Mammary epithelial cell (primary cell): ENCODE measurements at regions of chr11 and their contacts with region 1.

Region 1: GRCh38 chr11:11787305-11788062 is 54.3 kb upstream of the USP47 start:
- DNase-seq: peak; percentile 52
- H3K4me3 ChIP-seq: no peak overlapping the region
- H3K27ac ChIP-seq: no peak overlapping the region
- H3K4me1 ChIP-seq: peaks cover 13% of the 10 kb centered on the region
- H3K27me3 ChIP-seq: no peaks in the 10 kb centered on the region
- CTCF ChIP-seq: peak; percentile 78 to 83

Region 2: GRCh38 chr11:10770626-10771254 is 1016.7 kb before region 1 on chr11:
- CTCF ChIA-PET with region 1: no interaction called
- dilution Hi-C with region 1: no loop called
- in situ Hi-C with region 1: loop called in 1 of 2 experiments (anchors 25 kb)
- intact Hi-C with region 1: loop called (anchors 2 kb)
- DNase-seq: peak; percentile 20
- H3K4me3 ChIP-seq: no peak overlapping the region
- H3K27ac ChIP-seq: no peak overlapping the region
- H3K4me1 ChIP-seq: no peaks in the 10 kb centered on the region
- H3K27me3 ChIP-seq: no peaks in the 10 kb centered on the region
- CTCF ChIP-seq: peak; percentile 78 to 79

Region 3: DNA sequence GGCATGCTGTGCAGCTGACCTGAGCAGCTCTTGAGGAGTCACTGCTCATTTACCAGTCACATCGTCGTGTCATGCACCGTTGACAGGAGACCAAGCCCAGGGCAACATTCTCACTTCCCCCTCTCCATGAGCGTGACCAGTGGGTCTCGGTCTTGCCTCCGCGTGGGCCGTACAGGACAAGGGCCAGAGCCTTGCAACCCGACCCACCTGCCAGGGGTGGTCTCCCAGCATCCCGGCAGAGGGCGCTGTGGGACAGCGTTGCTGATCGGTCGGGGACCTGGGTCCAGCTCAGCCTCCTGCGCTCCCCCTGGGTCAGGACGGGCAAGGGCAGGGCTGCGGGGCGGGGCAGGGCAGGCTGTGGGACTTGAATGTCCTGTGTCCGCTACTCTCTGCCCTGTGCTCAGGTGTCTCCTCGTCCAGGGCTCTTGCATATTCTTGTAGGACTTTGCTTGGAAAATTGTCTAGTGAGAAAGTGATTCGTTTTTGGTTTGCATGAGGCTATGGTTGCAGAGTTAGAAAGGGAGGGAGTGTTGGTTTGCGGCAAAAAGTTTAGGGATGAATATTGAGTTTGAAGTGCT is 995.0 kb before region 1 on chr11:
- CTCF ChIA-PET with region 1: no interaction called
- dilution Hi-C with region 1: no loop called
- in situ Hi-C with region 1: loop called (anchors 5 to 25 kb)
- intact Hi-C with region 1: loop called (anchors 1 kb)
- DNase-seq: peak; percentile 59
- H3K4me3 ChIP-seq: peak overlapping the region in 1 of 3 experiments; percentile 17
- H3K27ac ChIP-seq: no peak overlapping the region
- H3K4me1 ChIP-seq: peaks cover 7% of the 10 kb centered on the region
- H3K27me3 ChIP-seq: no peaks in the 10 kb centered on the region
- CTCF ChIP-seq: peak; percentile 87 to 95

Region 4: DNA sequence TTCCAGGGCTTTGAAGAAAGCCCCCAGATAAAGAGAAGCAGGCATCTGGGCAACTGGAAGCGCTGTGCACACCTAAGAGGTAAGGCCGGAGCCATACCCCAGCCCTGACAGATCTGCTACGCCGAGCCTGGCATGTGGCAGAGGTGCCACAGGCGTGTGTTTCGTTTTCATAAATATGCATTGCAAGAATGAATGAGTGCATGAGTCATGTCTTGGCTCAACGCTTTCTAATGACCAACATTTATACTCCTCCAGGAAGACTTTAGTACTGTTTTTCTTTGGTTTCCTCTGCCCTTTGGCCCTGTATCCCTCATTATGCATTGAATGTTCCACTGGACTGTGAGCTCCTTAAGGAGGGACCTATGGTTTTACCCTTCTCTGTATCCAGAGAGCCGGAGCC is 395.7 kb before region 1 on chr11:
- CTCF ChIA-PET with region 1: no interaction called
- dilution Hi-C with region 1: no loop called
- in situ Hi-C with region 1: no loop called
- intact Hi-C with region 1: loop called (anchors 1 kb)
- DNase-seq: peak; percentile 84
- H3K4me3 ChIP-seq: no peak overlapping the region
- H3K27ac ChIP-seq: peak overlapping the region; percentile 60
- H3K4me1 ChIP-seq: peaks cover 38% of the 10 kb centered on the region
- H3K27me3 ChIP-seq: no peaks in the 10 kb centered on the region
- CTCF ChIP-seq: no peak

Region 5: DNA sequence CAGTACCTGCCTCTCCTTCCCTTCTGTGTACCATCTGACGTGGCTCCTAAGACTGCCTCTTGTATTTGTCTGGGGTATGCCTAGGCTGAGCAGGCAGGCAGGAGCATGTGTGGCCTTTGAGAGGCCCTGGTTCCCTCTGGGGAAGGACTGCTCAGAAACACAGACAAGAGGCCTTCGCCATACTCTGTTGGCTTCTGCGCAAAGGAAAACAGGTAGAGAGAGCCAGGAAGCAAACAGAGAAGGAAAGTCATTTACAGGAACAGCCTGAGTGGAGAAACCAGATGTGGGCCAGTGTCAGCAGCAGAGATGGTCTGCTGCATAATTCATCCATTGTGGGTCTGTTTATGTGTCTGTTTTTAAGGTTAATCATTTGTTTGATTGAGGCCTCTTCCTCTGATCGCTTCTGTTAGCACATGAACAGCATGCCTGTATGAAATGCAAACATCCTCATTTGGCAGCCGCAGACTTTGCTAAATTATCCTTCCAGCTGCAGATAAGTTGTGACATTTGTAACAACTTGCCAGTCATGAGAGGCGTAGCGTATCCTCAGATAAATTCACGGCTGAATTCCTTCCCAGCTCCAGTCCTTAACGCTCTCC is 285.1 kb before region 1 on chr11:
- CTCF ChIA-PET with region 1: no interaction called
- dilution Hi-C with region 1: no loop called
- in situ Hi-C with region 1: no loop called
- intact Hi-C with region 1: loop called (anchors 10 kb)
- DNase-seq: no peak
- H3K4me3 ChIP-seq: no peak overlapping the region
- H3K27ac ChIP-seq: no peak overlapping the region
- H3K4me1 ChIP-seq: no peaks in the 10 kb centered on the region
- H3K27me3 ChIP-seq: no peaks in the 10 kb centered on the region
- CTCF ChIP-seq: no peak

Region 6: DNA sequence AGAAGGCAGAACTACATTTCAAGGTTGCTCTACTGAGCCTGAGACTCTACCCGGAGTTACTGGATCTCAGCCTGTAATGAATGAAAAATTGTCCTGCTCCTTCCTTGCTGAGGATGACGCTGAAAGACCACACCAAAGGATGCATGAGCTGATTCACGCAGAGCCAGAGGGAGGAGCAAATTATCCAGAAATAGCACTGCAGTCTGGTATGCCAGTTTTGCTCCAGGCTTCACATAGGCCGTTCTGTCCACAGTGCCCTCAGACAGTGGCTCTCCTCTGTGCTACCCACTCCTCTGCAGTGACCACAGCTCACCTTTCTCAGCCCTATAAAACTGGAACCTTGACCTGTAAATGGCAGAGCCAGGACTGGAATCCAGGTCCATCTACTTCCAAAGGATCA is 86.4 kb before region 1 on chr11:
- CTCF ChIA-PET with region 1: no interaction called
- dilution Hi-C with region 1: no loop called
- in situ Hi-C with region 1: loop called (anchors 5 kb)
- intact Hi-C with region 1: loop called (anchors 1 kb)
- DNase-seq: peak; percentile 72
- H3K4me3 ChIP-seq: no peak overlapping the region
- H3K27ac ChIP-seq: no peak overlapping the region
- H3K4me1 ChIP-seq: peaks cover 8% of the 10 kb centered on the region
- H3K27me3 ChIP-seq: peaks cover 2% of the 10 kb centered on the region
- CTCF ChIP-seq: peak; percentile 46 to 64

Region 7: GRCh38 chr11:11871991-11872401 is 84.5 kb after region 1 on chr11:
- CTCF ChIA-PET with region 1: no interaction called
- dilution Hi-C with region 1: no loop called
- in situ Hi-C with region 1: no loop called
- intact Hi-C with region 1: no loop called
- DNase-seq: no peak
- H3K4me3 ChIP-seq: no peak overlapping the region
- H3K27ac ChIP-seq: no peak overlapping the region
- H3K4me1 ChIP-seq: no peaks in the 10 kb centered on the region
- H3K27me3 ChIP-seq: no peaks in the 10 kb centered on the region
- CTCF ChIP-seq: no peak